K562 (cell line): ENCODE measurements at regions of chr12 and their contacts with region 1.

Region 1: GRCh38 chr12:57815177-57816000 is 3.1 kb downstream of the AVIL start:
- DNase-seq: peak in 2 of 4 experiments; percentile 27 to 47
- ATAC-seq: peak; percentile 61
- H3K4me3 ChIP-seq: no peak overlapping the region
- H3K27ac ChIP-seq: no peak overlapping the region
- H3K4me1 ChIP-seq: peaks cover 10 to 25% of the 10 kb centered on the region in 2 experiments; a peak in 3 of 5 replicates
- H3K27me3 ChIP-seq: no peaks in the 10 kb centered on the region
- CTCF ChIP-seq: peak; percentile 41 to 61 (median 56); a peak in 4 of 6 replicates
- EP300 ChIP-seq: no peak
- POLR2A ChIP-seq: no peak
- RAD21 ChIP-seq: peak in 1 of 2 experiments; percentile 45; a peak in 2 of 4 replicates

Region 2: DNA sequence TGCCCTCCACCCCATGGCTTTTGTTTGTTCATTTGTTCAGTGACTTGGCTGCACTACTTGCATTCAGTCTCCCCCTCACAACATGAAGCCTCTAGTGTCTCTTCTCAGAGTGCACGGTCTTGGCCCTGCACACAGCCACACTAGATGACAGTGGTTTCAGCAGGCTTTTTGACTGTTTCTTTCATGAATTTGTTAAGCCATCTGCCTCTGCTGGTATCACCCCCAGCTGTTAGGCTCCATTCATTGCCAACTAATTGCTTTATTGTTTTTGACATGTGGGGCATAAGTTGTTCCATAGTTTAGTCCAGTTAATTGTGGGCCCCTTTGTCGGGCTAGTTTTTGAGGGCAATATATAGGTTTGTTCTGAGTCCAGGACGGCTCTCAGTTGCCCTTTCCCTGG is 102.7 kb before region 1 on chr12:
- CTCF ChIA-PET with region 1: no interaction called
- POLR2A ChIA-PET with region 1: no interaction called
- in situ Hi-C with region 1: no loop called
- intact Hi-C with region 1: no loop called
- DNase-seq: no peak
- ATAC-seq: no peak
- H3K4me3 ChIP-seq: no peak overlapping the region
- H3K27ac ChIP-seq: no peak overlapping the region
- H3K4me1 ChIP-seq: no peaks in the 10 kb centered on the region; a peak in 2 of 5 replicates
- H3K27me3 ChIP-seq: no peaks in the 10 kb centered on the region
- CTCF ChIP-seq: no peak
- EP300 ChIP-seq: no peak
- POLR2A ChIP-seq: no peak
- RAD21 ChIP-seq: no peak

Region 3: DNA sequence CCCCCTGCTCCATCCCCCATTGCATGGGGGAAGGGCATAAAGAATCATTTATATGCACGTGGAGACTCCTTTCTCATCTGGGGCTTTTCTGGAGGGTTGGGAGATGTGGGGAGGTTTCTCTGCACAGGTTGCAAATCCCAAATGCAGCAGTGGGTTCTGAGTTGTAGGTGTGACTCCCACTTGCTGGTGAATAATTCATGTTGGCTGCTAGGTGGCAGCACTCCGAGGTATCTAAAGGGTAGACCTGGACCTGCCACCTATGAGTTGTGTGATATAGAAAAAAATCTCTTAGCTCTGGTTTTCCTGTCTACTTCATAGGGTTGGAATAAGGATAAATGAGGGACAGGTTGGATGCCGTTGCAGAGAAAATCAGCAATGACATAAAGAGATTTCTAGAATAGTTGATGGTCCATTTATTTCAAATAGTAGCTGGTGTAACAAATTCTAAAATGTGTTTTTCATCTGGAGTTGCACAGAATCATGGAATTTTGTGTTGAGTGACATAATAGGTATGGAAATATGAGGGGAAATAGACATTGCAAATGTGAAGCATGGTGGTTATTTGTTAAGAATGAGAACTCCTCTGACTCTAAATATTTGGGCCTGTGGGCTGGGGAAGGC is 55.9 kb before region 1 on chr12:
- CTCF ChIA-PET with region 1: no interaction called
- POLR2A ChIA-PET with region 1: no interaction called
- in situ Hi-C with region 1: no loop called
- intact Hi-C with region 1: loop called (anchors 2 kb)
- DNase-seq: peak in 2 of 4 experiments; percentile 37 to 58
- ATAC-seq: peak; percentile 37
- H3K4me3 ChIP-seq: no peak overlapping the region
- H3K27ac ChIP-seq: no peak overlapping the region
- H3K4me1 ChIP-seq: peaks cover 10 to 24% of the 10 kb centered on the region in 2 experiments; a peak in 4 of 5 replicates
- H3K27me3 ChIP-seq: no peaks in the 10 kb centered on the region
- CTCF ChIP-seq: peak; percentile 50 to 65 (median 59); a peak in 5 of 6 replicates
- EP300 ChIP-seq: no peak
- POLR2A ChIP-seq: no peak
- RAD21 ChIP-seq: 0 out of 4 replicates have a peak, but pooled peaks of 1 of the 2 experiments have one; percentile 8

Region 4: DNA sequence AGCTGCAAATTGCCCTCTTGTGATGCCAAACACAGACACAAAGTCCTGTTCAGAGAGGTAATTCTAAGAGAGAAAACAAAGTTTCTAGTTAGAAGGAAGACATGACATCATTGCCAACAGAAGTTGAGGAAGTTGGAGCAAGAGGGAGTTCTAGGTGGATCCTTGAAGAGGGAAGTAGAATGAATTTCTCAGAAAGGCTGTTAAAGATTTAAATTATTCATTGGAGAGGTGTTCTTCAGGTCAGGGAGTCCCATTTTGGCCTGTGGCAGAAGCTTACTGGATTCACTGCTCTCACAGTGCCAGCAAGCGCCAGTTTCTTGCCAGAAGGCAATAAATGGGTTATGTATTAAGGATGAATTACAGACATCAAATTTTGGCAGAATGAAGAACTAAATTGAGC is 17.5 kb before region 1 on chr12:
- CTCF ChIA-PET with region 1: no interaction called
- POLR2A ChIA-PET with region 1: interaction called, 21 read pairs
- in situ Hi-C with region 1: no loop called
- intact Hi-C with region 1: no loop called
- DNase-seq: no peak
- ATAC-seq: no peak
- H3K4me3 ChIP-seq: no peak overlapping the region
- H3K27ac ChIP-seq: no peak overlapping the region
- H3K4me1 ChIP-seq: peaks cover 2 to 4% of the 10 kb centered on the region in 2 experiments; a peak in 2 of 5 replicates
- H3K27me3 ChIP-seq: no peaks in the 10 kb centered on the region
- CTCF ChIP-seq: no peak
- EP300 ChIP-seq: no peak
- POLR2A ChIP-seq: 0 out of 2 replicates have a peak, but pooled peaks have one; percentile 24
- RAD21 ChIP-seq: no peak

Region 5: GRCh38 chr12:57836442-57837375 is 21.3 kb after region 1 on chr12:
- CTCF ChIA-PET with region 1: no interaction called
- POLR2A ChIA-PET with region 1: interaction called, 21 read pairs
- in situ Hi-C with region 1: no loop called
- intact Hi-C with region 1: no loop called
- DNase-seq: peak in 2 of 4 experiments; percentile 78 to 82
- ATAC-seq: peak; percentile 82
- H3K4me3 ChIP-seq: no peak overlapping the region; the same call in 1 of the 2 replicates
- H3K27ac ChIP-seq: peak overlapping the region; percentile 53; the same call in 2 of the 3 replicates
- H3K4me1 ChIP-seq: peaks cover 51 to 53% of the 10 kb centered on the region in 2 experiments
- H3K27me3 ChIP-seq: no peaks in the 10 kb centered on the region
- CTCF ChIP-seq: no peak
- EP300 ChIP-seq: peak; percentile 35; the same call in 1 of the 2 replicates
- POLR2A ChIP-seq: no peak
- RAD21 ChIP-seq: no peak; a peak in 1 of 4 replicates